Caco-2 (cell line): ENCODE measurements at regions of chrX and their contacts with region 1.

Region 1: DNA sequence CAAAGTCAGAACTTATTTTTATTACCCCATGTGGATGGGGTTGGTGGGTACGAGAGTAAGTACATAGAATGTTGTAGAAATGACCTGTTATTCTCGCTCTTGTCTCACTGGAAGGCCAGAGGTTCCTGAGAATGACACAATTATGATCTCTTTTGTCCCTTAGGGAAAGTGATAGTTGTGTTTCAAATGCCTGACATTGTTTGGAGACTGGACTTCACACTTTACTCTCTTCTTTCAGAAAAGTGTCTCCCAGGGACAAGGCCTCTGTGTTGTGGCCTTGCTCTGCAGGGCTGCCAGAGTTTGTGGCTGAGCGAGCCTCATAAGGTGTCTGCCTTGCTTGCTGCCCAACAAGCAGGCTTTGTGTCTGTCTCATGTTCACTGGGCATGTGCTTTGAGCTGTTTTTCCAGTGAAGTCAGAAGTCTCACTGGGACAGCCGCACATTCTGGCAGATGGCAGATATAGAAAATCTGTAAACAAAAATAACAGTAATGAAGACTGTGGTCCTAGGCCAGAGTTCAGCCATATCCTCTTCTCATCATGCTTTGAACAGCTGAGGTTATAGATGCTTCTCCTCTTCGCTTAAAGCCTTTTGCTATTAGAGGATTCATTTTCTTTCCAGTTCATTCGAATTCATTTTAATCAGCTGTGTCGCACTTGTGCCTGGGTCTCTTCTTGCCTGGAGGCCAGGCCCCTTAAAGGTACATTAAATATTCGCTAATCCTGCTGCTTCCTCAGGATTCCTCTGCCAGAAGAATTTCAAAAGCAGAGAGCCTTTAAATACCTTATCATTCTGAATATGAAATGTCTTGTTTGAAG is 14.4 kb downstream of the PPEF1 start:
- DNase-seq: peak; percentile 29 to 33
- H3K4me3 ChIP-seq: no peak overlapping the region
- H3K4me3 Mint-ChIP-seq: peak overlapping the region; percentile 33
- H3K27ac Mint-ChIP-seq: peak overlapping the region; percentile 49
- H3K4me1 ChIP-seq: peaks cover 12% of the 10 kb centered on the region; the same call in 1 of the 2 replicates
- H3K4me1 Mint-ChIP-seq: peaks cover 8% of the 10 kb centered on the region
- H3K27me3 ChIP-seq: no peaks in the 10 kb centered on the region
- H3K27me3 Mint-ChIP-seq: no peaks in the 10 kb centered on the region
- CTCF ChIP-seq: no peak

Region 2: DNA sequence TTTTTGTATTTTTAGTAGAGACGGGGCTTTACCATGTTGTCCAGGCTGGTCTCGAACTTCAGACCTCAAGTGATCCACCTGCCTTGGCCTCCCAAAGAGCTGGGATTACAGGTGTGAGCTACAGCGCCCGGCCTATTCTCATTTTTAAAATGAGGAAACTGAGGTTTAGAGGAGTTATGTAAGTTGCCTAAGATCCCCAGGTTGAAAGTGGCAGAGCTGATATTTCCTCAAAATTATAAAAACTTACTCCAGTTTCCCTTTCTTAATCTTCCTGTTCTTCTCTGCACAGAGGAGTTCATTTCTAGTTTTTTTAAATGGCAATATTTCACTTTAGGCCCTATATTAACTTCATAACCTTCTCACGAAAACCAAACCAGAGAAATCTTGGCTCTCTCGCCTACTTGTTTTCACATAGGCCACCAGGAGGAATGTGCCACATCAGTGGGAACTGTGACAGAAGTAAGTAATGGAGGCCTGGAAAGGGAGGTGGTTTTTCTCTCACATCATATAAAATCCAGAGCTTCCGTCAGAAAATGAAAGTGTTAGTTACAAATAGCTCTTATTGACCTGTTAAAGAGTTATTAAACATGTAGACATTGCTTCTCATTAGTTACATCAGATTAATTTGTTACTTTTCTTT is 33.9 kb before region 1 on chrX:
- CTCF ChIA-PET with region 1: no interaction called
- POLR2A ChIA-PET with region 1: no interaction called
- intact Hi-C with region 1: loop called (anchors 5 kb)
- DNase-seq: no peak
- H3K4me3 ChIP-seq: no peak overlapping the region
- H3K4me3 Mint-ChIP-seq: no peak overlapping the region
- H3K27ac Mint-ChIP-seq: peak overlapping the region; percentile 61
- H3K4me1 ChIP-seq: no peaks in the 10 kb centered on the region
- H3K4me1 Mint-ChIP-seq: peaks cover 17% of the 10 kb centered on the region
- H3K27me3 ChIP-seq: no peaks in the 10 kb centered on the region
- H3K27me3 Mint-ChIP-seq: no peaks in the 10 kb centered on the region
- CTCF ChIP-seq: no peak

Region 3: GRCh38 chrX:18757956-18758932 is 36.4 kb after region 1 on chrX:
- CTCF ChIA-PET with region 1: no interaction called
- POLR2A ChIA-PET with region 1: no interaction called
- intact Hi-C with region 1: loop called (anchors 1 kb)
- DNase-seq: no peak
- H3K4me3 ChIP-seq: no peak overlapping the region
- H3K4me3 Mint-ChIP-seq: no peak overlapping the region
- H3K27ac Mint-ChIP-seq: no peak overlapping the region
- H3K4me1 ChIP-seq: peaks cover 5% of the 10 kb centered on the region
- H3K4me1 Mint-ChIP-seq: no peaks in the 10 kb centered on the region
- H3K27me3 ChIP-seq: no peaks in the 10 kb centered on the region
- H3K27me3 Mint-ChIP-seq: no peaks in the 10 kb centered on the region
- CTCF ChIP-seq: no peak